Transverse colon (tissue), 4 donors: ENCODE measurements at regions of chr14 and their contacts with region 1.

Region 1: GRCh38 chr14:33103966-33104365 is 165.3 kb downstream of the NPAS3 start:
- DNase-seq: no peak
- H3K4me3 ChIP-seq: no peak overlapping the region
- H3K27ac ChIP-seq: no peak overlapping the region
- H3K4me1 ChIP-seq: peaks cover 0 to 20% (median 0%) of the 10 kb centered on the region in 4 donors
- H3K27me3 ChIP-seq: no peaks in the 10 kb centered on the region
- CTCF ChIP-seq: no peak
- EP300 ChIP-seq: no peak
- POLR2A ChIP-seq: no peak

Region 2: GRCh38 chr14:33175534-33175933 is 71.6 kb after region 1 on chr14:
- in situ Hi-C with region 1: no loop called
- intact Hi-C with region 1: loop called (anchors 2 kb)
- DNase-seq: no peak
- H3K4me3 ChIP-seq: no peak overlapping the region
- H3K27ac ChIP-seq: no peak overlapping the region
- H3K4me1 ChIP-seq: no peaks in the 10 kb centered on the region
- H3K27me3 ChIP-seq: no peaks in the 10 kb centered on the region
- CTCF ChIP-seq: no peak
- EP300 ChIP-seq: no peak
- POLR2A ChIP-seq: no peak